ENCODE measurements at regions of chr5 and their contacts with region 1.

Region 1: GRCh38 chr5:100505984-100506670 is 29.0 kb upstream of the FAM174A start:
- DNase-seq: no peak
- H3K4me3 ChIP-seq: no peak overlapping the region
- H3K27ac ChIP-seq: no peak overlapping the region
- H3K4me1 ChIP-seq: no peaks in the 10 kb centered on the region
- H3K27me3 ChIP-seq: no peaks in the 10 kb centered on the region
- CTCF ChIP-seq: no peak
- POLR2A ChIP-seq: no peak

Region 2: GRCh38 chr5:100566382-100567141 is 60.4 kb after region 1 on chr5:
- intact Hi-C with region 1: no loop called
- DNase-seq: no peak
- H3K4me3 ChIP-seq: peak overlapping the region in 1 of 8 donors; percentile 18
- H3K27ac ChIP-seq: no peak overlapping the region
- H3K4me1 ChIP-seq: no peaks in the 10 kb centered on the region
- H3K27me3 ChIP-seq: no peaks in the 10 kb centered on the region
- CTCF ChIP-seq: no peak
- POLR2A ChIP-seq: no peak

Region 3: GRCh38 chr5:100615362-100615761 is 109.2 kb after region 1 on chr5:
- intact Hi-C with region 1: no loop called
- DNase-seq: no peak
- H3K4me3 ChIP-seq: no peak overlapping the region
- H3K27ac ChIP-seq: no peak overlapping the region
- H3K4me1 ChIP-seq: no peaks in the 10 kb centered on the region
- H3K27me3 ChIP-seq: no peaks in the 10 kb centered on the region
- CTCF ChIP-seq: no peak
- POLR2A ChIP-seq: no peak

Region 4: DNA sequence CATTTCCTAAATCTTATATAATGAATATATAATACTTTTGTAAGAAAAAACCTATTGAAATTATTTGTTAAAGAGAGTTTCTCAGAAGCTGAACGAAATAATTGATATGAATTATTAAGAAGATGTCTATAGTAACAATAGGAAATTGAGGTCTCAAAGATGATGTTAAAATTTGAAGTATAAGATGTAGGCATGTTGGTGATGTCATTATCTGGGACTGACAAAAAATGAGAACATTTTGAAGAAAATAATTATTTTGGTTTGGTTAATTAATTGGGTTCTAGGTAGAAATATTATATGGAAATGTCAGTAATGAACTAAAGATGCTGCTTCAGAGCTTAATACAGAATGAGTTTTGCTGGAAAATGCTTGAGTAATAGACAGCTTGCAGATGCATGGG is 898.4 kb after region 1 on chr5:
- intact Hi-C with region 1: loop called (anchors 10 kb)
- DNase-seq: no peak
- H3K4me3 ChIP-seq: no peak overlapping the region
- H3K27ac ChIP-seq: no peak overlapping the region
- H3K4me1 ChIP-seq: no peaks in the 10 kb centered on the region
- H3K27me3 ChIP-seq: peaks cover 0 to 3% (median 0%) of the 10 kb centered on the region in 7 donors
- CTCF ChIP-seq: no peak
- POLR2A ChIP-seq: no peak